Motor neuron (in vitro differentiated cells): ENCODE measurements at regions of chr17 and their contacts with region 1.

Region 1: DNA sequence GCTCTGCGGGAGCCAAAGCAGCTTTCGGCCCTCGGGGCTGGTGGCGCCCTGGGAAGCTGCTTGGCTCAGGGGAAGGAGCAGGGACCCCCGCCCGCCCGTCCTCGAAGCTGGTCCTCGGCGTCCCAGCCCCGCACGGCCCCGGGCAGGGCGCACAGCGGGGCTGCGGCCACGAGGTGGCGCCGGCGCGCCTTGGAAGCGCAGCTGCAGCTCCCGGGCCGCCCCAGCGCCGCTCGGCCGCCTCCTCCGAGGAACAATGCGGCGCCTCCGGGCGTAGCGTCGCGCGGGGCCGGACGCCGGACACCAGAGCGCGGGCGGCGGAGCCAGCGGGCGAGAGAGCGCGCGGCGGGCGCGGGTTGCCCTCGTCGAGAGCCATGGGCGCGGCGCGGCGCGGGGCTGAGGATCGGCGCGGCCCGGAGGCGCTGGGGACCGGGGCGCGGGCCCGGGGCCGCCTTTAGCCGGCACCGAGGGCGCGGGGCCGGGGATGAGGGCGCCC is at the start of gene MGAT5B:
- ATAC-seq: peak; percentile 77 to 94 (median 82)
- H3K4me3 ChIP-seq: peak within 1 kb of the TSS; percentile 51 to 74 (median 64)
- H3K27ac ChIP-seq: peak within 1 kb of the TSS; percentile 58 to 66
- H3K4me1 ChIP-seq: peaks cover 42 to 48% of the 10 kb centered on the region in 2 donors
- total RNA-seq, gene MGAT5B: 1.3 to 19.6 (median 10.0) TPM

Region 2: DNA sequence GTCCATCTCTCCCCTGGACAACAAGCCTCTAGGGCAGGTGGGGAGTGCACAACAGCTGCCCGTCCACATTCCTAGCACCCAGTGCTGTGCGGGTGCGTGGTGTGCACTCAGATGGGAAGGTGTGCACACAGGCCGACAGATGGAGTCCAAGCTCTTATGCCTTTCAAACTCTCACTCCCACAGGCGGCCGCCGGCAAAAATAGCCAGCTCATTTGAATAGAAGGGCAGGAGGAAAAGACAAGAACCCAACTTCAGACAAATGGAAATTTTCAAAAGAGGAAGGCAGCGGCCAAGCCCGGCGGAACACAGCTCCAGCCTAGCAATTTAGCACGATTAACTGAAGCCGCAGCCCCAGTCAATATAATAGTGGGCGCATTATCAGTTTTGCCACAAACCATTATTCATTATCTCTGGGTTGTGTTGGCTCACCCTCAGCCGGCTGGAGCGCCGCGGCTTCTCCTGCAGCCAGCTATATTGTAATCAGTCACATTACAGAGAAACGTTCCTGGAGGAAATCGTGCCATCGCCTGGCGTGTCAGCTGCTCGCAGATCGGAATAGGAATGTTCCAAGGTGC is 168.7 kb after region 1 on chr17:
- in situ Hi-C with region 1: loop called in 2 of 9 experiments (anchors 25 kb)
- ATAC-seq: peak in 5 of 8 experiments; percentile 78 to 85 (median 83)
- H3K4me3 ChIP-seq: no peak overlapping the region
- H3K27ac ChIP-seq: peak overlapping the region; percentile 37 to 45
- H3K4me1 ChIP-seq: peaks cover 43 to 46% of the 10 kb centered on the region in 2 donors

Region 3: GRCh38 chr17:77054936-77055335 is 186.7 kb after region 1 on chr17:
- in situ Hi-C with region 1: loop called in 6 of 9 experiments (anchors 5 to 25 kb)
- ATAC-seq: peak in 3 of 8 experiments; percentile 7 to 57 (median 18)
- H3K4me3 ChIP-seq: no peak overlapping the region
- H3K27ac ChIP-seq: no peak overlapping the region
- H3K4me1 ChIP-seq: peaks cover 10 to 20% of the 10 kb centered on the region in 2 donors

Region 4: DNA sequence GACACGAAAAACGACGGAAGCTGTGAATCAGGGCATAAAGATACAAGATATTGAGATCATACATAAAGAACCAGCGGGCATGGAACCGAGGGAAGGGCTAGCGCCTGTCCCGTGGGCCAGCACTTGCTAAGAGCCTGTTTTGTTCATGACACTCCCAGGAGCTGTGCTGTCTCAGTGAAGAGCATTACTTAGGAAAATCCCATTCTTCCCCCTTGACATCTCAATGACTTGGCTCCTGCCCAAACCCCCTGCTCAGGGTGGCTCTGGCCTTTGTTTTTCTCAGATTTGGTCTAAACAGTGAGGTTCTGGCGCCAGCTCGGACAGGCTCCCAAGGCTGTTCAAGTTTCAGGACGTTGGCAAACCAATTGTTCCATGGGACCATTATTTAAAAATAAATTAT is 193.4 kb after region 1 on chr17:
- in situ Hi-C with region 1: loop called in 6 of 9 experiments (anchors 5 to 25 kb)
- ATAC-seq: peak in 5 of 8 experiments; percentile 56 to 78 (median 75)
- H3K4me3 ChIP-seq: no peak overlapping the region
- H3K27ac ChIP-seq: no peak overlapping the region
- H3K4me1 ChIP-seq: peaks cover 7% of the 10 kb centered on the region in 2 donors